MCF 10A (cell line): ENCODE measurements at regions of chr6 and their contacts with region 1.

Region 1: DNA sequence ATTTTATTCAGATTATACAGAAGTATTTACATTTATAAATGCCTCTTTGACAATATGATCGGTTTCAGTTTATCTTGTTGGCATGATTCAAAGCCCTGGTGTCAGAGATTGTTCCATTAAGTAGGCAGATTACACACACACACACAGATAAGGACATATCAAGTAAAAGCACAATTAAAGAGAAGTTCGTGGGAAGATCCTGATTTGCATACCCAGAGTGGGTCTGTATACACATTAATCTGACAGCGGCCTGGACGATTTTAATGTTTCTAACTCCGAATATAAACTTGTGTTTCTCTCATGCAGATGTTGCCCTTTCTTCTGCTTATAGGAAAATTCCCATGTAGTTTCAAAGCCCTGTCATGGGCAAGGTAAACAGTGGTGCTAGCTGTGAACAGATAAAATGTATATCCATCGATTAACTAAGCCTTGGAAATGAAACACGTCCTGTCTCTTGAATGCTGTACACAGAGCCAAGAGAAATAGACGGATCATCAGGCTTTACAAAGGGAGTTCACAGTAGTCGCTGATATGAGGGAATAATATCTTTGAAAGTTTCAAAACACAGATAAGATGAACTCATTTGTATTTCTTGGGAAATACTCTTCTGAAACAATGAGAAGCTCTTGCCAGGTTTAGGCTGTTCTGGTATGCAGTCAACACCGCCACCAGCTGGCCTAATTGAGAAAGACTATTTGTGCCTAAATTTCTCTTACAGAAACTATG is 108.2 kb upstream of the GMDS start:
- DNase-seq: peak; percentile 82
- H3K4me3 Mint-ChIP-seq: no peak overlapping the region
- H3K27ac Mint-ChIP-seq: no peak overlapping the region
- H3K4me1 Mint-ChIP-seq: peaks cover 9% of the 10 kb centered on the region
- H3K27me3 Mint-ChIP-seq: no peaks in the 10 kb centered on the region
- CTCF ChIP-seq: peak; percentile 85

Region 2: DNA sequence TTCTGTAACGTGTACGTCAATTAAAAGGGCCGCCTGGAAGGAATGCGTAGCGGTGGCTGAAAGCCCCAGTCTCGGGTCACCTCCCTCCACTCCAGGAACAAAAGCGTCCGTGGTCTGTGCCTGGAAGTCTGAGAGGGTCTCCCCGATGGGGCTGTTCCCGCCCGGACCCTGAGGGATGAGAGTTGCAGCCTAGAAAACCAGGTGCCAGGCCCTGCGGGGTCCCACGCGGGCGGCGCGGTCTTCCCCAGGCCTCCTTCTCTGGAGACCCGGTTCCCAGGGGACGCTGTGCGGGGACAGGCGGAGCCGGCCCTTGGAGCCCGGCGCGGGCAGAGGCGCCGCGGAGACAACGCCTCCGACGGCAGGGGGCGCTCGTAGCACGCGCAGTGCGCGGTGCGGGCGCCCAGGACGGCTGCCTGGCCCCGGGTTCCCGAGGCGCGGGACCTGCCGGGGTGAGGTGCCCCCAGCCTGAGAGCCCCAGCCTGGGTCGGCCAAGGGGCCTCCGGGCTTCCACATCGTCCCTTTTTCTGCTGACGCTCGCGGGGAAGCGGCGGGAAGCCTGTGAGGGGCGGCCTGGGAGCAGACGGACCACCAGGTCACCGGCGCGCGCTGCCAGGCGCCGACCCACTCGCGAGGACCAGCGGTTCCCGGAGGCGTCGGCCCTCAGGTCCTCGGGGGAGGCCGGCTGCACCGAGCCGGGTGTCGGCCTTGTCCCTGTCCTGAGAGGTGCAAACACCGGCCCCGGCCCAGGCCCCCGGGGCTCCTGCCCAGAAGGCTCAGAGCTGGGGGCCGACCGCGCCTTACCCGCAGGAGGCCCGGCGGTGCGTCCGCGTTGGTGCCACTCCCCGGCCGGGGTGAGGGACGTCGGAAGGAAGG is 749.2 kb before region 1 on chr6:
- CTCF ChIA-PET with region 1: interaction called, 5 read pairs
- POLR2A ChIA-PET with region 1: no interaction called
- intact Hi-C with region 1: loop called (anchors 2 kb)
- DNase-seq: peak; percentile 66
- H3K4me3 Mint-ChIP-seq: peak overlapping the region; percentile 28
- H3K27ac Mint-ChIP-seq: no peak overlapping the region
- H3K4me1 Mint-ChIP-seq: no peaks in the 10 kb centered on the region
- H3K27me3 Mint-ChIP-seq: no peaks in the 10 kb centered on the region
- CTCF ChIP-seq: peak; percentile 97

Region 3: GRCh38 chr6:1856381-1856780 is 497.2 kb before region 1 on chr6:
- CTCF ChIA-PET with region 1: no interaction called
- POLR2A ChIA-PET with region 1: no interaction called
- intact Hi-C with region 1: loop called (anchors 10 kb)
- DNase-seq: peak; percentile 73
- H3K4me3 Mint-ChIP-seq: no peak overlapping the region
- H3K27ac Mint-ChIP-seq: no peak overlapping the region
- H3K4me1 Mint-ChIP-seq: peaks cover 6% of the 10 kb centered on the region
- H3K27me3 Mint-ChIP-seq: no peaks in the 10 kb centered on the region
- CTCF ChIP-seq: no peak

Region 4: DNA sequence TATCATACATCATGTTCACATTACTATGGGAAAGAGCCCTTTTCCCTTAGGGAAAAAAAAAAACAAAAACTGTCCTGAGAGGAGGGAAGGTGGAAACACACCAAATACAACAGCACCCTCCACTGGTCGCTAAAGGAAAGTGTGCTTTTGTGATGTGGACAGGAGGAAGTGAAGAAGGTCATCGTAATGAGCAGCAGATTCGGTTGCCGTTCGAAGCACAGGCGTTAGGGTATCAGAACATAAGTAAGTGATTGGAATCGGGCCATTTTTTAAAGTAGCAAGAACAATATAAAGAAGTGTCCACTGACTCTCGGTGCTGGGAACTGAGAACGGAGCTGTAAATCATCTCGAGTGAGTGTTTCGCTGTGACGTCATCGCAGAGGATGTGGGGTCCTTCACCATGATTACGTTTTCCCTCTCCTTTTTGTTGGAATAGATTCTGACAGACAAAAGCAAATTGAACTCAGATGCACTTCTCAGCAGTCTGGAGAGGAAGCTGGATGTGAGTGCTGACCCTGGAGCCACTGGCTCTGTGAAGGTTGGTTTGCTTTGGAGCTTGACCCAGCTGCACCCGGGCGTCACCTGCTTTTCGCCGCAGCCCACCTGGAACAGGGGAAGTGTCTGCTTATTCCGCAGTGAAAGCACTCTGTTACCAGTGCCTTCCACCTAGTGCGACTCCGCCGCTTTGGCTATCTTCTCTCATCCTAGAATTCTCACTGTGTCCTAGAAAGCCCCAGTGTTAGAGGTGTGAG is 95.4 kb after region 1 on chr6:
- CTCF ChIA-PET with region 1: interaction called, 4 read pairs
- POLR2A ChIA-PET with region 1: no interaction called
- intact Hi-C with region 1: loop called (anchors 1 kb)
- DNase-seq: peak; percentile 82
- H3K4me3 Mint-ChIP-seq: no peak overlapping the region
- H3K27ac Mint-ChIP-seq: no peak overlapping the region
- H3K4me1 Mint-ChIP-seq: peaks cover 6% of the 10 kb centered on the region
- H3K27me3 Mint-ChIP-seq: no peaks in the 10 kb centered on the region
- CTCF ChIP-seq: peak; percentile 67